CD4-positive, alpha-beta memory T cell (primary cell): ENCODE measurements at regions of chr17 and their contacts with region 1.

Region 1: GRCh38 chr17:28812091-28812747 is 30.4 kb downstream of the FAM222B start:
- DNase-seq: peak; percentile 94 to 97 (median 95)
- H3K4me3 ChIP-seq: peak overlapping the region; percentile 75 to 84
- H3K4me3 Mint-ChIP-seq: peak overlapping the region; percentile 90 to 98 (median 93)
- H3K27ac ChIP-seq: peak overlapping the region; percentile 90
- H3K27ac Mint-ChIP-seq: peak overlapping the region; percentile 94 to 100 (median 98)
- H3K4me1 ChIP-seq: peaks cover 44% of the 10 kb centered on the region
- H3K4me1 Mint-ChIP-seq: peaks cover 19 to 47% (median 37%) of the 10 kb centered on the region in 4 donors
- H3K27me3 ChIP-seq: no peaks in the 10 kb centered on the region
- H3K27me3 Mint-ChIP-seq: no peaks in the 10 kb centered on the region

Region 2: DNA sequence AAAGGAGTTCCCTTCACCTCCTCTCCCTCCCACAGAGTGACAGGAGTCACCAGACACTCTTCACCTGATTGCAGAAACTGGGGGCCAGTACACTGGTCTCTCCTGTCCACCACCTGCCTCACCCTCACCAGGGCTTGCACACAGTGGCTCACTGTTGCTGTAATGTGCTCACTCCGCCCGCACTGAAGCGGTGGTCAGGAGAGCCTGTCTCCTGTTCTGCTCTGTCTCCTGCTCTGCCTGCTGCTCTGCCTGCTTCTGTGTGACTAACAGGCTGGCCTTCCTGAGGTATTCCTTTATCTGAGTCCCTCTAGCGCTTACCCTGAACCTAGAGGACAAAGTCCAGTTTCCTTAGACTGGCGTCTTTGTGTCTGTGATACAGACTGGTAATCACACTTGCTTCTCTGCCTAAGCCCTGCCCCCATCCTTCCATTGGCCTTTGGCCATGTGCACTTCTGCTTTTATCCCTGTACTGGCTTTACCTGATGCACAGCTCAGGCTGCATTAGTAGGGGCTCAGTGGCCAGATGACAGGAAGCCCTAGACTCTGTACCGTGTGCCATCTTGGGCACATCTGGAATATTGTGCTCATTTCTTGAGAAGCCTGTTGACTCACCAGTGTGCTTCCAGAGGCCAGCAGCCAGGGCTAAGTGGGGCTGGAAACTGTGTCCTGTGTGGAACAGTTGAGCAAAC is 113.8 kb before region 1 on chr17:
- CTCF ChIA-PET with region 1: no interaction called
- POLR2A ChIA-PET with region 1: no interaction called
- intact Hi-C with region 1: no loop called
- DNase-seq: no peak
- H3K4me3 ChIP-seq: no peak overlapping the region
- H3K4me3 Mint-ChIP-seq: no peak overlapping the region
- H3K27ac ChIP-seq: no peak overlapping the region
- H3K27ac Mint-ChIP-seq: peak overlapping the region in 1 of 7 donors; percentile 68
- H3K4me1 ChIP-seq: no peaks in the 10 kb centered on the region
- H3K4me1 Mint-ChIP-seq: no peaks in the 10 kb centered on the region
- H3K27me3 ChIP-seq: no peaks in the 10 kb centered on the region
- H3K27me3 Mint-ChIP-seq: no peaks in the 10 kb centered on the region

Region 3: GRCh38 chr17:28842282-28843012 is 30.2 kb after region 1 on chr17 and contains the start of gene FAM222B:
- CTCF ChIA-PET with region 1: interaction called, 7 read pairs
- POLR2A ChIA-PET with region 1: interaction called, 9 read pairs
- intact Hi-C with region 1: loop called (anchors 2 kb)
- DNase-seq: peak; percentile 85 to 87 (median 87)
- H3K4me3 ChIP-seq: peak within 1 kb of the TSS; percentile 55 to 87
- H3K4me3 Mint-ChIP-seq: peak within 1 kb of the TSS; percentile 93 to 100 (median 98)
- H3K27ac ChIP-seq: peak within 1 kb of the TSS; percentile 84
- H3K27ac Mint-ChIP-seq: peak within 1 kb of the TSS; percentile 93 to 99 (median 98)
- H3K4me1 ChIP-seq: peaks cover 25% of the 10 kb centered on the region
- H3K4me1 Mint-ChIP-seq: peaks cover 15 to 26% (median 21%) of the 10 kb centered on the region in 4 donors
- H3K27me3 ChIP-seq: no peaks in the 10 kb centered on the region
- H3K27me3 Mint-ChIP-seq: no peaks in the 10 kb centered on the region
- total RNA-seq, gene FAM222B: 19.0 to 23.0 TPM

Region 4: GRCh38 chr17:28854457-28855350 is 42.5 kb after region 1 on chr17 and contains the start of gene ERAL1:
- CTCF ChIA-PET with region 1: interaction called, 4 read pairs
- POLR2A ChIA-PET with region 1: interaction called, 4 read pairs
- intact Hi-C with region 1: loop called (anchors 1 kb)
- DNase-seq: peak; percentile 82 to 90 (median 85)
- H3K4me3 ChIP-seq: peak within 1 kb of the TSS; percentile 88 to 91
- H3K4me3 Mint-ChIP-seq: peak within 1 kb of the TSS; percentile 90 to 98 (median 95)
- H3K27ac ChIP-seq: peak within 1 kb of the TSS; percentile 73
- H3K27ac Mint-ChIP-seq: peak within 1 kb of the TSS; percentile 82 to 96 (median 94)
- H3K4me1 ChIP-seq: peaks cover 13% of the 10 kb centered on the region
- H3K4me1 Mint-ChIP-seq: peaks cover 4 to 19% (median 11%) of the 10 kb centered on the region in 4 donors
- H3K27me3 ChIP-seq: no peaks in the 10 kb centered on the region
- H3K27me3 Mint-ChIP-seq: no peaks in the 10 kb centered on the region
- total RNA-seq, gene ERAL1: 23.5 to 24.3 TPM